Activated CD8-positive, alpha-beta memory T cell treated with anti-CD3 and anti-CD28 coated beads, Interleukin-2, amount 10 ng/mL, durations not matched to agents 7 days and 5 days (primary cell): ENCODE measurements at regions of chr16 and their contacts with region 1.

Region 1: DNA sequence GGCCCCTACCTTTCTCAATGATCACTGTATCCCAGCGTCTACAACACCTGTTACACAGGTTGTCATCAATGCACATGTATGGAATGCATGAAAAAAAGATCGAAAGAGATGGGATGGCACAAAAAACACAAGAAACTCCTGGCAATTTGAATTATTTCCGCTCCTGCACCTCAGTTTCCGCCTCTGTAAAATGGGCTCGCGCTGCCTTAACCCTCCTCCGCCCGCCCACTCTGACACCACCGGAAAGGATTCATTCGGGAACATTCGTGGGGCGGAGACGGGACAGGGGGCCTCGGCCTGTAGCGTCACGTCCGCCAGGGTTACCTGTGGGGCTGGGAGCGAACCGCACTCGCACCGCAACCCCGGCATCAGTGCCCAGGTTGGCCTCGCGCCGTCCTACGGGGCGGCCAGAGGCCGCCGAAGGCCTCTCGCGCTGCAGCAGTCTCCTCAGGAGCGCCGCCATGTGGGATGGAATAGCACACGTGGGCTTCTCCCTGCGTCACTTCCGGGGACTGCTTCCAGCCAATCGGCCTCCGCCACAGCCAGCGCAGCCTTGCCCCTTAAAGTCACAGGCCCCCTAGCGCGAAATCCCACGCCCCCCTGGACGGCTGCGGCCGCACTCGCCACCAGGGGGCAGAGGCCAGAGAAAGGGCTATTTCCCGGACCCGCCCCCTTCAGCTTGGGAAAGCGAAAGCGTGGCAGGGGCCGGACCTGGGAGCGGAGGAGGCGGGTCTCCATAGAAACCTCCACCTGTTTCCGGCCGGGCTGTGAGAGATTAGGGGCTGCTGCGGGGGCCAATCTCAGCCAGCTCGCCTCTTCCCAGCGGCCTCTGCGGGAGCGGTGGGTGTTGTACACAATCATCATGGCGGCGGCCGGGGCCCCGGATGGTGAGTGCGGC is at the starts of genes EARS2 and UBFD1:
- DNase-seq: peak; percentile 98
- ATAC-seq: peak; percentile 93
- H3K4me3 Mint-ChIP-seq: peak within 1 kb of the TSS; percentile 92
- H3K27ac Mint-ChIP-seq: peak within 1 kb of the TSS; percentile 84
- H3K4me1 Mint-ChIP-seq: peaks cover 44% of the 10 kb centered on the region
- H3K27me3 Mint-ChIP-seq: no peaks in the 10 kb centered on the region
- total RNA-seq, gene EARS2: 14.3 to 15.9 TPM
- total RNA-seq, gene UBFD1: 46.1 to 64.7 TPM

Region 2: GRCh38 chr16:23527961-23528643 is 29.0 kb before region 1 on chr16:
- CTCF ChIA-PET with region 1: no interaction called
- DNase-seq: no peak
- ATAC-seq: no peak
- H3K4me3 Mint-ChIP-seq: no peak overlapping the region
- H3K27ac Mint-ChIP-seq: peak overlapping the region; percentile 8
- H3K4me1 Mint-ChIP-seq: no peaks in the 10 kb centered on the region
- H3K27me3 Mint-ChIP-seq: no peaks in the 10 kb centered on the region

Region 3: GRCh38 chr16:23595951-23596720 is 39.0 kb after region 1 on chr16 and contains the start of gene NDUFAB1:
- CTCF ChIA-PET with region 1: interaction called, 18 read pairs
- DNase-seq: peak; percentile 93
- ATAC-seq: peak; percentile 99
- H3K4me3 Mint-ChIP-seq: peak within 1 kb of the TSS; percentile 80
- H3K27ac Mint-ChIP-seq: peak within 1 kb of the TSS; percentile 82
- H3K4me1 Mint-ChIP-seq: peaks cover 21% of the 10 kb centered on the region
- H3K27me3 Mint-ChIP-seq: no peaks in the 10 kb centered on the region
- total RNA-seq, gene NDUFAB1: 90.2 to 111 TPM